Activated CD4-positive, alpha-beta memory T cell treated with anti-CD3 and anti-CD28 coated beads for 36 hours (primary cell): ENCODE measurements at regions of chr4 and their contacts with region 1.

Region 1: GRCh38 chr4:82201805-82202641 is 171.8 kb downstream of the HNRNPD start:
- DNase-seq: peak; percentile 54
- H3K4me3 Mint-ChIP-seq: no peak overlapping the region
- H3K27ac Mint-ChIP-seq: no peak overlapping the region
- H3K4me1 Mint-ChIP-seq: no peaks in the 10 kb centered on the region
- H3K27me3 Mint-ChIP-seq: no peaks in the 10 kb centered on the region

Region 2: DNA sequence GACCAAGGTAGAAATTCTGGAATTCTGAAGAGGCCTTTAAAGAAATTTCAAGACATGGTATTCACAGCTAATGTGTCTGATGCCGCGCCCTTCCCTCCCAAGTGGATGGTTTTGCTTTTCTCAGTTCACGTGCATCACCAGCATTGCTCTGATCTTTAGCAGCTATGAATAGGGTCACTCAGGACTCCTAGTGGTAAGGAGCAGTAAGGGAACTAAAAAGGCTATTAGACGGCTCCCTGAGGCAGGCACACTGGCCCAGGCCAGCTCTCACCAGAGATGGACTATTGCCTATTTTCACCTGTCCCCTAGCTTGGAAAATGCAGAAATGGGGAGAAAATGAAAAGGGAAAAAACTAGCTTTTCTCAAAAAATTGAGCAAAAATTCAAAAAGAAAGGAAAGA is 282.8 kb before region 1 on chr4:
- CTCF ChIA-PET with region 1: no interaction called
- POLR2A ChIA-PET with region 1: no interaction called
- intact Hi-C with region 1: loop called (anchors 5 kb)
- DNase-seq: no peak
- H3K4me3 Mint-ChIP-seq: no peak overlapping the region
- H3K27ac Mint-ChIP-seq: no peak overlapping the region
- H3K4me1 Mint-ChIP-seq: peaks cover 2% of the 10 kb centered on the region
- H3K27me3 Mint-ChIP-seq: peaks cover 6% of the 10 kb centered on the region

Region 3: DNA sequence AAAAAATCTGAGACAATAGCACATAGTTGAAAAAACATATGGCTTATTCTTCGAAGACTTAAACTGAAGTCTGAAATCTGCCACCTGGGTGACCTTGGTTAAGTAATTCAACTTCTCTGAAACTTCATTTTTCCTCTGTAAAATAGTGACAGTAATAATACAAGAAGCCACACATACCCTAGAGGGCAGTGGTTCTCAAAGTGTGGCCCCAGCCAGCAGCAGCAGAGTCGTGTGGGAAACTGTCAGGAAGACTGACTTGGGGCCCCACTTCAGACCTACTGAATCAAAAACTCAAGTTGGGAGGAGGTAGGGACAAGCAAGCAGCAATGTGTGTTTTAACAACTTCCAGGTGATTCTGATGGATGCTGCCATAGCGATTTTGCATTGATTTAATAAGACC is 78.1 kb before region 1 on chr4:
- CTCF ChIA-PET with region 1: no interaction called
- POLR2A ChIA-PET with region 1: no interaction called
- intact Hi-C with region 1: loop called (anchors 5 kb)
- DNase-seq: peak; percentile 11
- H3K4me3 Mint-ChIP-seq: no peak overlapping the region
- H3K27ac Mint-ChIP-seq: no peak overlapping the region
- H3K4me1 Mint-ChIP-seq: peaks cover 2% of the 10 kb centered on the region
- H3K27me3 Mint-ChIP-seq: no peaks in the 10 kb centered on the region

Region 4: GRCh38 chr4:82268050-82268825 is 66.2 kb after region 1 on chr4:
- CTCF ChIA-PET with region 1: interaction called, 10 read pairs
- POLR2A ChIA-PET with region 1: no interaction called
- intact Hi-C with region 1: no loop called
- DNase-seq: peak; percentile 54
- H3K4me3 Mint-ChIP-seq: no peak overlapping the region
- H3K27ac Mint-ChIP-seq: no peak overlapping the region
- H3K4me1 Mint-ChIP-seq: peaks cover 9% of the 10 kb centered on the region
- H3K27me3 Mint-ChIP-seq: peaks cover 3% of the 10 kb centered on the region